CD8-positive, alpha-beta T cell (primary cell): ENCODE measurements at regions of chr19 and their contacts with region 1.

Region 1: GRCh38 chr19:42244347-42245220 is 2.2 kb upstream of the GSK3A start:
- DNase-seq: peak; percentile 79 to 96 (median 91)
- ATAC-seq: peak; percentile 38
- H3K4me3 ChIP-seq: peak overlapping the region; percentile 68 to 85
- H3K4me3 Mint-ChIP-seq: peak overlapping the region; percentile 98
- H3K27ac ChIP-seq: peak overlapping the region; percentile 49 to 92
- H3K27ac Mint-ChIP-seq: peak overlapping the region; percentile 94
- H3K4me1 ChIP-seq: peaks cover 36% of the 10 kb centered on the region
- H3K4me1 Mint-ChIP-seq: peaks cover 50% of the 10 kb centered on the region
- H3K27me3 ChIP-seq: no peaks in the 10 kb centered on the region
- H3K27me3 Mint-ChIP-seq: no peaks in the 10 kb centered on the region
- CTCF ChIP-seq: peak; percentile 68

Region 2: DNA sequence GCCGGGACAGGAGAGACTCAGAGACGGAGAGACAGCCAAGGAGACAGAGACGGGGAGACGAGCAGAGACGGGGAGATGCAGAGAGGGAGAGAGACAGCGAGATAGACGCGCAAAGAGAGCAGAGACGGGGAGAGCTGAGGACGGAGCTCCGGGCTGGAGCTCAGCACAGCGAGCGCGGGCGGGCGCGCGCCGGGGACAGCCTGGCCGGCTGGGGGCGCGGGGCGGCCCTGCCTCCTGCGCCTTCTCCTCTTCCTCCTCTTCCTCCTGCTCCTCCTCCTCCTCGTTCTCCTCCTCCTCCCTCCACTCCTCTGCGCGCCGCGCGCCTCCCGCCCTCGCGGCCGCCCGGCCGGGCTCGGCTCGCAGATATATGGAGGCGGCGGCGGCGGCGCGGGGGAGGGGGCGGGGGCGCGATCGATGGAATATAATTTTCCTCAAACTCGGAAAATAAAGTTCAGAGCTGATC is 316.3 kb before region 1 on chr19 and contains the start of gene ERFL:
- CTCF ChIA-PET with region 1: no interaction called
- POLR2A ChIA-PET with region 1: no interaction called
- intact Hi-C with region 1: no loop called
- DNase-seq: peak in 3 of 9 experiments; percentile 23 to 55 (median 40)
- ATAC-seq: peak; percentile 37
- H3K4me3 ChIP-seq: peak within 1 kb of the TSS; percentile 54 to 58
- H3K4me3 Mint-ChIP-seq: no peak within 1 kb of the TSS
- H3K27ac ChIP-seq: peak within 1 kb of the TSS in 1 of 2 experiments; percentile 56
- H3K27ac Mint-ChIP-seq: peak within 1 kb of the TSS; percentile 96
- H3K4me1 ChIP-seq: peaks cover 24% of the 10 kb centered on the region
- H3K4me1 Mint-ChIP-seq: peaks cover 34% of the 10 kb centered on the region
- H3K27me3 ChIP-seq: peaks cover 0 to 13% of the 10 kb centered on the region in 2 experiments
- H3K27me3 Mint-ChIP-seq: no peaks in the 10 kb centered on the region
- CTCF ChIP-seq: no peak
- total RNA-seq, gene ERFL: 5.4 to 6.8 TPM

Region 3: DNA sequence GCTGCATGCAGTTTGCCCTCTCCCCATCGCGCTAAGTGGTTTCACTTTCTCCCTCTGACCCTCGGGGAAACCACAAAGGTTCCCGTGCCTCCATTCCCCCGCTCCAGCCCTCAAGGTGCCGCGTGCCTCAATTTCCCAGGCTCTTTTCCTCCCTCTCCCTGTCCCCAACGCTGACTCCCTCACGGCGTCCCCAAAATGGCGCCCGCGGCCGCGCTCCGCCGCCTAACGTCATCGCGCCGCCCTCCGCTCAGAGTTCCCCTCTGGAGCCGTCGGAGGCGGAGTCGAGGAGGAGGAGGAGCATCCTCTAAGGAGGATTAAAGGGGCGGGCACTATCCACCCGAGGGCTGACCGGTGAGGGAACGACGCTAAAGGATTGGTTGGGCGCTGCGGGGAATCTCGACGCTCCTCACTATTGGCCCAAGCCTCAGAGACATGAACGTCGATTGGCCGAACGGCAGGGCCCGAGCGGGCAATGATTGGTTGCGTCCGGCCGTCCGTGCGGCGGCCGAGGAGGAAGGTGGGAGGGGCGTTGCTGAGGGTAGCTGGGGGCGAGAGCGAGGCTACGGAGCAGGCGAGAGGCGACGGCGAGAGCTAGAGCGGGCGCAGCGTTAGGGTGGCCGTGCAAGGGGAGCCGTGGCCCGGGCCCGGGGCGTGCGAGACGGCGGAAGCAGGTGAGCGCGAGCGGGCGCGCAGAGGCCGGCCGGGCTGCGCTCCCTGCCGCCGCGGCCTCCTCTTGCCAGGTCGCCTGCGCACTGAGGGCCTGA is 168.8 kb before region 1 on chr19 and contains the start of gene ZNF574:
- CTCF ChIA-PET with region 1: no interaction called
- POLR2A ChIA-PET with region 1: no interaction called
- intact Hi-C with region 1: loop called (anchors 1 kb)
- DNase-seq: peak; percentile 97 to 100 (median 98)
- ATAC-seq: peak; percentile 95
- H3K4me3 ChIP-seq: peak within 1 kb of the TSS; percentile 72 to 76
- H3K4me3 Mint-ChIP-seq: peak within 1 kb of the TSS; percentile 97
- H3K27ac ChIP-seq: peak within 1 kb of the TSS; percentile 94 to 100
- H3K27ac Mint-ChIP-seq: peak within 1 kb of the TSS; percentile 99
- H3K4me1 ChIP-seq: peaks cover 21% of the 10 kb centered on the region
- H3K4me1 Mint-ChIP-seq: peaks cover 37% of the 10 kb centered on the region
- H3K27me3 ChIP-seq: no peaks in the 10 kb centered on the region
- H3K27me3 Mint-ChIP-seq: no peaks in the 10 kb centered on the region
- CTCF ChIP-seq: no peak
- total RNA-seq, gene ZNF574: 25.0 to 26.2 TPM

Region 4: GRCh38 chr19:42158926-42159325 is 85.7 kb before region 1 on chr19:
- CTCF ChIA-PET with region 1: no interaction called
- POLR2A ChIA-PET with region 1: no interaction called
- intact Hi-C with region 1: no loop called
- DNase-seq: no peak
- ATAC-seq: no peak
- H3K4me3 ChIP-seq: no peak overlapping the region
- H3K4me3 Mint-ChIP-seq: no peak overlapping the region
- H3K27ac ChIP-seq: no peak overlapping the region
- H3K27ac Mint-ChIP-seq: no peak overlapping the region
- H3K4me1 ChIP-seq: peaks cover 13% of the 10 kb centered on the region
- H3K4me1 Mint-ChIP-seq: peaks cover 13% of the 10 kb centered on the region
- H3K27me3 ChIP-seq: no peaks in the 10 kb centered on the region
- H3K27me3 Mint-ChIP-seq: no peaks in the 10 kb centered on the region
- CTCF ChIP-seq: no peak

Region 5: GRCh38 chr19:42199440-42200115 is 45.0 kb before region 1 on chr19:
- CTCF ChIA-PET with region 1: interaction called, 4 read pairs
- POLR2A ChIA-PET with region 1: interaction called, 9 read pairs
- intact Hi-C with region 1: loop called (anchors 1 kb)
- DNase-seq: peak in 7 of 9 experiments; percentile 36 to 80 (median 64)
- ATAC-seq: peak; percentile 30
- H3K4me3 ChIP-seq: peak overlapping the region; percentile 50 to 59
- H3K4me3 Mint-ChIP-seq: peak overlapping the region; percentile 87
- H3K27ac ChIP-seq: peak overlapping the region; percentile 88 to 93
- H3K27ac Mint-ChIP-seq: peak overlapping the region; percentile 95
- H3K4me1 ChIP-seq: peaks cover 84% of the 10 kb centered on the region
- H3K4me1 Mint-ChIP-seq: peaks cover 81% of the 10 kb centered on the region
- H3K27me3 ChIP-seq: no peaks in the 10 kb centered on the region
- H3K27me3 Mint-ChIP-seq: no peaks in the 10 kb centered on the region
- CTCF ChIP-seq: peak; percentile 29

Region 6: GRCh38 chr19:42254989-42255765 is 10.6 kb after region 1 on chr19 and contains the start of gene ERF:
- CTCF ChIA-PET with region 1: interaction called, 9 read pairs
- POLR2A ChIA-PET with region 1: interaction called, 8 read pairs
- intact Hi-C with region 1: loop called (anchors 1 kb)
- DNase-seq: peak; percentile 89 to 97 (median 93)
- ATAC-seq: peak; percentile 71
- H3K4me3 ChIP-seq: peak within 1 kb of the TSS; percentile 85 to 97
- H3K4me3 Mint-ChIP-seq: peak within 1 kb of the TSS; percentile 86
- H3K27ac ChIP-seq: peak within 1 kb of the TSS; percentile 96 to 97
- H3K27ac Mint-ChIP-seq: peak within 1 kb of the TSS; percentile 87
- H3K4me1 ChIP-seq: peaks cover 36% of the 10 kb centered on the region
- H3K4me1 Mint-ChIP-seq: peaks cover 27% of the 10 kb centered on the region
- H3K27me3 ChIP-seq: no peaks in the 10 kb centered on the region
- H3K27me3 Mint-ChIP-seq: no peaks in the 10 kb centered on the region
- CTCF ChIP-seq: no peak
- total RNA-seq, gene ERF: 92.1 to 95.1 TPM

Region 7: GRCh38 chr19:42283143-42284065 is 38.8 kb after region 1 on chr19:
- CTCF ChIA-PET with region 1: interaction called, 65 read pairs
- POLR2A ChIA-PET with region 1: interaction called, 20 read pairs
- intact Hi-C with region 1: loop called (anchors 1 kb)
- DNase-seq: peak; percentile 90 to 98 (median 97)
- ATAC-seq: peak; percentile 69
- H3K4me3 ChIP-seq: peak overlapping the region; percentile 40 to 59
- H3K4me3 Mint-ChIP-seq: no peak overlapping the region
- H3K27ac ChIP-seq: peak overlapping the region; percentile 85 to 94
- H3K27ac Mint-ChIP-seq: no peak overlapping the region
- H3K4me1 ChIP-seq: peaks cover 47% of the 10 kb centered on the region
- H3K4me1 Mint-ChIP-seq: peaks cover 48% of the 10 kb centered on the region
- H3K27me3 ChIP-seq: no peaks in the 10 kb centered on the region
- H3K27me3 Mint-ChIP-seq: no peaks in the 10 kb centered on the region
- CTCF ChIP-seq: no peak

Region 8: DNA sequence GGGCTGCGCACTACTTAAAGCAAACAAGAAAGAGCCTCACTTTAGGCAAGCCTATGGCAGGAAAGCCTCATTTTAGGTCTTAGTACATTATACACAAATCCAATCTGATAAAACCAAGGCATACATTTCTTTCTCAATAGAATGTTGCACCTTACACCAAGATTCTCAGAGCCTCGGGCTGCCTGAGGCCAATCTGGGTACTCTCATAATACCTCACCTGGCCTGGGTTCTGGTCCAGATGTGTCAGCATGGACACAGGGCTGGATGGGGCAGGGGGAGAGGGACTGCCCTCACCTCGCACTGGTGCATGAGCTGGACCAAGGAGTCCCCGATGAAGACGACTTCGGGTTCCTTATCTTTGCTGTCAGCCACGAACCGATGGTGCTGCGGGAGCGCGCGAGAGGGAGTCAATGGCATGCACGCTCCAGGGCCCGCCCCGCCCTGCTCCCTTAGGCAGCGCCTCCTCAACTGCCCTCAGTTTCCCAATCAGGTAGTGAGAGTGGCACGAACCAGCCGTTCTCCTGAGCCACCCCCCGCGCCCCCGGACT is 57.1 kb after region 1 on chr19 and contains the start of gene PRR19:
- CTCF ChIA-PET with region 1: interaction called, 11 read pairs
- POLR2A ChIA-PET with region 1: no interaction called
- intact Hi-C with region 1: loop called in 1 of 2 experiments (anchors 1 kb)
- DNase-seq: peak in 1 of 9 experiments; percentile 46
- ATAC-seq: peak; percentile 5
- H3K4me3 ChIP-seq: peak within 1 kb of the TSS; percentile 88 to 89
- H3K4me3 Mint-ChIP-seq: peak within 1 kb of the TSS; percentile 87
- H3K27ac ChIP-seq: peak within 1 kb of the TSS; percentile 37 to 56
- H3K27ac Mint-ChIP-seq: peak within 1 kb of the TSS; percentile 49
- H3K4me1 ChIP-seq: peaks cover 19% of the 10 kb centered on the region
- H3K4me1 Mint-ChIP-seq: peaks cover 28% of the 10 kb centered on the region
- H3K27me3 ChIP-seq: no peaks in the 10 kb centered on the region
- H3K27me3 Mint-ChIP-seq: no peaks in the 10 kb centered on the region
- CTCF ChIP-seq: no peak
- total RNA-seq, gene PRR19: 0.19 TPM in 1 of 2 experiments, not detected in the other